Mammary epithelial cell (primary cell): ENCODE measurements at regions of chr16 and their contacts with region 1.

Region 1: GRCh38 chr16:3761375-3762106 is 44.2 kb upstream of the TRAP1 start:
- DNase-seq: no peak
- H3K4me3 ChIP-seq: no peak overlapping the region
- H3K27ac ChIP-seq: no peak overlapping the region
- H3K4me1 ChIP-seq: no peaks in the 10 kb centered on the region
- H3K27me3 ChIP-seq: no peaks in the 10 kb centered on the region
- CTCF ChIP-seq: no peak

Region 2: GRCh38 chr16:3701531-3701930 is 60.0 kb before region 1 on chr16:
- CTCF ChIA-PET with region 1: no interaction called
- dilution Hi-C with region 1: loop called (anchors 5 kb)
- in situ Hi-C with region 1: no loop called
- intact Hi-C with region 1: no loop called
- DNase-seq: no peak
- H3K4me3 ChIP-seq: no peak overlapping the region
- H3K27ac ChIP-seq: no peak overlapping the region
- H3K4me1 ChIP-seq: no peaks in the 10 kb centered on the region
- H3K27me3 ChIP-seq: no peaks in the 10 kb centered on the region
- CTCF ChIP-seq: no peak

Region 3: DNA sequence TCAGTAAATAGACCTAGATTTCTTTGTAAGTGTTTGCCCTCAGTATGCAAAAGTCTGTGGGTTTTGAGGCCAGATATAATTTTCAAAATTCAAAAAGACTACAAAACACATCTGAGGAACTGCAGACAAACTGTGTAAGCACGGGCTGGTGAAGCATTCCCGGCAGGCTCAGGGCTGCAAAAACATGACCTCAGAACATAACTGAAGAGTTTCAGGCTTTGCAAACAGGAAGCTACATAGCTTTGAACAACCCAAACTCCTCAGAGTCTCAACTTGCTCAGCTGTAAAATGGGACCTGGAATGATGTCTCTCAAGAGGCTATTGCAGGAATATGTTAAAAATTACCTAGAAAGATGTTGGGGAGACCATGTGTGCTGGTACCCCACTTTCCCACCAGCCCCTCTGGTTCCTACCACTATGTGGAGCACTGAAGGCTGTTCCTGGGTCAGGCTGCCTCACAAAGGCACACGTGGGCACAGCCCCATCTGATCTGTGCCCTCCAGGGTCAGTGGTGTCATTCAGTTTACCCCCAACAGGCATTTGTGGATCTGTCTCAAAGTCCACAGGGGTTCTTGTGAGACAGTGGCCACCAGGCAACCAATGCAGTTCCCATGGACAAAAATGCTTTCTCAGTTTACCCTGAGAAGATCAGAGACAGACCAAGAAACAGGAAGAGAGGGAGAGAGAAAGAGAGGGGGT is 46.0 kb after region 1 on chr16:
- CTCF ChIA-PET with region 1: no interaction called
- dilution Hi-C with region 1: loop called (anchors 5 kb)
- in situ Hi-C with region 1: no loop called
- intact Hi-C with region 1: no loop called
- DNase-seq: no peak
- H3K4me3 ChIP-seq: no peak overlapping the region
- H3K27ac ChIP-seq: no peak overlapping the region
- H3K4me1 ChIP-seq: no peaks in the 10 kb centered on the region
- H3K27me3 ChIP-seq: no peaks in the 10 kb centered on the region
- CTCF ChIP-seq: no peak

Region 4: GRCh38 chr16:4371357-4372000 is 609.9 kb after region 1 on chr16 and contains the start of gene VASN:
- CTCF ChIA-PET with region 1: no interaction called
- dilution Hi-C with region 1: no loop called
- in situ Hi-C with region 1: no loop called
- intact Hi-C with region 1: loop called (anchors 10 kb)
- DNase-seq: peak; percentile 44
- H3K4me3 ChIP-seq: peak within 1 kb of the TSS; percentile 37 to 54 (median 53)
- H3K27ac ChIP-seq: no peak within 1 kb of the TSS
- H3K4me1 ChIP-seq: peaks cover 75% of the 10 kb centered on the region
- H3K27me3 ChIP-seq: no peaks in the 10 kb centered on the region
- CTCF ChIP-seq: no peak
- total RNA-seq, gene VASN: 5.0 to 25.5 TPM